GM13976 (cell line): ENCODE measurements at regions of chr4 and their contacts with region 1.

Region 1: DNA sequence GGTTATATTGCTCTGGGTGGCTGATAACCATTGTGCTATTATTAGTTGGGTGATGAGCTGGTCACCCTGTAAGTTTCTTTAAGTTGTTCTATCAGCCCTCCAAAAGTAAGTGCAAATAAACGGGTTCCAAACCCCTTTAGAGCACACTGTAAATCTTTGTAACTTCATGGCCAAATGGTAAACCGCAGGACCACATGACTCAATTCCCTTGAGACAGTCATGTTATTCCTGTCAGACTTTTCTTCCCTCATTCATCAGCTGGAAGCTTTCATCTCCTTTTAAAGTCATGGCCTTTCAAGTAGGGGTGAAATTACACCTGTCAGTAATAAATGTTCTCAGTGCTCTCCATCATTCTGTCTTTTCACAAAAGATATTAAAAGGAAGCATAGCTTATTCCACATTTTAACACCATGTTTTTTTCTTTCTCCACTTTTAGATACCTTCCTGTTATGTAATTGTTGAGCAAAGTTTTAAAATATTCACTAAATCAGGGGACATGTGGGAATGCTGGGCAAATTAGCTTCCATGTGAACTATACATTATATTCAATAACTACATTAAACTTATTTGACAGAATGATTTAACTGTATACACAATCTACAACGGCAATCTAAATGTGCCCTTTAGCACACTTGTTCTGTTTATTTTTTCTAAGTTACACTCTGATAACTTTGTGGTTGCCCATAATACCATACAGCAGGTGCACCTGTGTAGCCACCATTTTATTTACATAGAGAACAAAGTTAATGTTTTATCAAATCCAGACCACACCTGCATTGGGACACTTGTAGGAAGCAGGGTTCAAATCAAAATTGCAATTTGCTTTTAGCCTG is 275.5 kb downstream of the CFAP299 start:
- DNase-seq: no peak
- CTCF ChIP-seq: no peak

Region 2: DNA sequence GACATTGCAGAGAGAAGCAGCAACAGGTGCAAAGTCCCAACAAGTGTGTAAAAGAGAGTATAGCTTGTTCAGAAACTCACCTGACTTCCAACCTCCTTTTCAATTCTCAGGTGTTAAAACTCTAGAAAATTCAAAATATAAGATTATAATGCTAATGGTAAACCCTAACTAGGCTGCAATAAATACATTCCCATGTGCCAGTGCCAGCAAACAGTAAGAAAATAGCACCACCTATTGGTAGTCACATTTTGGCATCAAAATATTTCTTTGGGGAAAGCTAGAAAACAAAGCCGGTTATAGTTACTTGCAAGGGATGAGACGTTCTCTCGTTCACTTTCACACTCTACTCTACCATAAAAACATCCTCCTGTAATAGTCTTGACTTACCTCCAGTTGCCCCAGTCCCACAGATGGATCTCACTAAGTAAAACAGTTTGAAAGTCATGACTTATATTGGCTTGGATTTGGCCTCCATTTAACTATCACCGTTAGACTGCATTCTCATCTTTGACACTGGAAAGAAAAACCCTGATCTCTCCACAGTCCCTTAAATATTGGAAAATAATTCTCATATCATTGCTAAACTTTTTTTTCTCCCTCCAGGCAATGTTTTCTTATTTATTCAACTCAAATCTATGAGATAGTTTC is 429.1 kb after region 1 on chr4:
- in situ Hi-C with region 1: loop called (anchors 10 kb)
- DNase-seq: no peak
- CTCF ChIP-seq: peak; percentile 54